ENCODE measurements at regions of chr16 and their contacts with region 1.

Region 1: DNA sequence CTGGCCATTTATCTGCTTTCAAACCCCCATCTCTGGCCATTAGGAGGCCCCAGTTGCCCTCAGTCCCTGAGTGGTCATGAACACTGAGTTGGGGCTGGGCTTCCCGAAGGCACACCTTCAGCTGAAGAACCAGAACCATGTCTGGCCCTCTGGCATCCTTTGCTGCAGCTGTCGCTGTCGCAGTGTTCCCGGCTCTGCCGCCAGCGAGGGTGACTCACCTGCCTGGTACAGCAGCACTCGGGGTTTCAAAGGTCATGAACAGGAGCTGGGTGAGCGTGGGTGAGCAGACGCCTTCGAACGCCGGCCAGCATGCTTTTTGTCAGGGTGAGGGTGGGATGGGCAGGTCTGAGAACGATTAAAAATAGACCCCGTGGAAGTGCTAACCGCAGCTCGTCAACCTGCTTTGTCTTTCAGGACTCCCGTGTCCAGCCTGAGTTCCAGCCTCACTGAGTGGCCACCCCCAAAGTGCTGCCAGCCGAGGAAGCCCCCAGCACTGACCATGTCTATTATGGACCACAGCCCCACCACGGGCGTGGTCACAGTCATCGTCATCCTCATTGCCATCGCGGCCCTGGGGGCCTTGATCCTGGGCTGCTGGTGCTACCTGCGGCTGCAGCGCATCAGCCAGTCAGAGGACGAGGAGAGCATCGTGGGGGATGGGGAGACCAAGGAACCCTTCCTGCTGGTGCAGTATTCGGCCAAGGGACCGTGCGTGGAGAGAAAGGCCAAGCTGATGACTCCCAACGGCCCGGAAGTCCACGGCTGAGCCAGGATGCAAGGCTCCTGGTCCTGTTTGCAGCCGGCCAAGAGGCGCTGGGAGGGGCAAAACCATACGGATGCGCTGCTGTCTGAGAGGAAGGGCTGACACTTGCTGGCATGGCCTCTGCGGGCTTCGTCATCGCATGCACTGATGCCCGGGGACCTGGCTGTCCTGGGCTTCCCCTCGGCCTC is 7.6 kb downstream of the SNN start:
- DNase-seq: peak in 1 of 2 donors; percentile 31
- ATAC-seq: peak in 6 of 8 donors; percentile 5 to 65 (median 40)
- H3K4me3 ChIP-seq: no peak overlapping the region
- H3K27ac ChIP-seq: peak overlapping the region in 7 of 10 donors; percentile 31 to 88 (median 75)
- H3K4me1 ChIP-seq: peaks cover 48 to 100% (median 93%) of the 10 kb centered on the region in 9 donors
- H3K27me3 ChIP-seq: no peaks in the 10 kb centered on the region
- CTCF ChIP-seq: no peak

Region 2: DNA sequence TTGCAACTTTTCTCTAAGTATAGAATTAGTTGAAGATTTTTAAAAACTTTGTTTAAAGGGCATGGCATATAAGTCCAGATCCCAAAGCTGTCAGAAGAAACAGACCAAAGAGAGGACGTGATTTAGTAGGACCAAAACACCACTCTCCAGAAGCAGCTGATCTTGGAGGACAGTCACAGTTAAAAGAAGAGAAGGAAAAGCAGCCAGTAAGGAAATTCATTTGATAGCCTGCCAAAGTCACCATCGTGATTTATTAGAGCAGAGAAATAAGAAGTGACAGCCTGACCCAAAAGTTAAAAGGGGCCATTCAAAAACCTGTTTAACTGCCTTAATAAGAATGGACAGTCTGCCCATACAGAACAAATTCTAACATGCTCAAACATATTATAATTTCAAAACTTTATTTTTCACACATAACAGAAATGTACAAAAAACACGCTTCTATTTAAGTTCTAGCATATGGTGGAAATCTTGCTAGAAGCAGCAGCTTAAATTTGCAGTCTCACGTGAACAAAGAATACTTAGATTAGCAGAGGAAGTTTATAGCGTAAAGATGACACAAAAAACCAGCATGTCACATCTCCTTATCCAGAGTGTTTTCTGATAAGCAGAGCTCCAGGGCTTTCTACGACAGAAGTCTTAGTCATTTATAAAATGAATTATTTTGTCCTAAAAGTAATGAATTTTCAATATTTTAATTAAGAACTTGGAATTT is 29.6 kb after region 1 on chr16:
- intact Hi-C with region 1: loop called in 1 of 10 experiments (anchors 2 kb)
- DNase-seq: no peak
- ATAC-seq: no peak
- H3K4me3 ChIP-seq: no peak overlapping the region
- H3K27ac ChIP-seq: peak overlapping the region in 8 of 10 donors; percentile 0 to 78 (median 62)
- H3K4me1 ChIP-seq: peaks cover 2 to 47% (median 27%) of the 10 kb centered on the region in 9 donors
- H3K27me3 ChIP-seq: no peaks in the 10 kb centered on the region
- CTCF ChIP-seq: no peak